ENCODE measurements at regions of chr7 and their contacts with region 1.

Region 1: DNA sequence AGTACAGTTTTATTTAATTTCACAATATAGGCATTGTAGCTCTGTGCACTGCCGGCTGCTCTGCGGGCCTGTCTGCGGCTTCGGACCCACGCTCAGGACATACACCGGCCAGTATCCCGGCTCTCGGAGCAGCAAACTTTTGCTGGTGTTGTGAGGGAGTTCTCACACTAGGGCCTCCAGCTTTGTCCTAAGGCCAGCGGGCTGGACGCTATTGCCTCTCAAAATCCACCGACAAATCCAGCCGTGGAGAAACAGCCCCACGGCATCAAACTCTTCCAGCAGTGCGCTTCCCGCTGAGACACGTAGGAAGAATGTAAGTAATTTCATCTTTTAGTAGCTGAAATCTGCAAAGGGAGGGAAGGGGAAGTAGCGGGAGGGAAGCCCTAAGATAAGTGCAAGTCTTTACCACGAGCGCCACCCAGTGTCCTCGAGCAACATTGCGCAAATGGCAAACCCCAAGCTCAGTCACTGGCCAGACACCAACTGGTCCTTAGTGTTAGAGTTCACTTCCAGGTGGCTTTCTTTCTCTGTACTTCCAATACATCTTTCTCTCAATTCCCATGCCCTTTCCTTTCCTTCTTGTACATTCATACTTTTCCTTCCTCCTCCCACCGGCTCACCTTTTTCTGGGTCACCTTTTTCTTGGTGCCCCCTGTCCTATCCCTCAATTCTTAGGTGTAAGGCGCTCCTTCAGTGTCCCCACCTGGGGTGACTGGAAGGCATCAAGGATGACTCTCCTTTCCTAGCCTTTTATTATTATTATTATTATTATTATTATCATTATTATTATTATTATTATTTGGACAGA is 3.0 kb upstream of the DLX5 start:
- DNase-seq: peak; percentile 77 to 87 (median 87)
- ATAC-seq: peak; percentile 87 to 92
- H3K4me3 ChIP-seq: peak overlapping the region; percentile 66
- H3K27ac ChIP-seq: no peak overlapping the region
- H3K4me1 ChIP-seq: peaks cover 3% of the 10 kb centered on the region
- H3K27me3 ChIP-seq: no peaks in the 10 kb centered on the region

Region 2: DNA sequence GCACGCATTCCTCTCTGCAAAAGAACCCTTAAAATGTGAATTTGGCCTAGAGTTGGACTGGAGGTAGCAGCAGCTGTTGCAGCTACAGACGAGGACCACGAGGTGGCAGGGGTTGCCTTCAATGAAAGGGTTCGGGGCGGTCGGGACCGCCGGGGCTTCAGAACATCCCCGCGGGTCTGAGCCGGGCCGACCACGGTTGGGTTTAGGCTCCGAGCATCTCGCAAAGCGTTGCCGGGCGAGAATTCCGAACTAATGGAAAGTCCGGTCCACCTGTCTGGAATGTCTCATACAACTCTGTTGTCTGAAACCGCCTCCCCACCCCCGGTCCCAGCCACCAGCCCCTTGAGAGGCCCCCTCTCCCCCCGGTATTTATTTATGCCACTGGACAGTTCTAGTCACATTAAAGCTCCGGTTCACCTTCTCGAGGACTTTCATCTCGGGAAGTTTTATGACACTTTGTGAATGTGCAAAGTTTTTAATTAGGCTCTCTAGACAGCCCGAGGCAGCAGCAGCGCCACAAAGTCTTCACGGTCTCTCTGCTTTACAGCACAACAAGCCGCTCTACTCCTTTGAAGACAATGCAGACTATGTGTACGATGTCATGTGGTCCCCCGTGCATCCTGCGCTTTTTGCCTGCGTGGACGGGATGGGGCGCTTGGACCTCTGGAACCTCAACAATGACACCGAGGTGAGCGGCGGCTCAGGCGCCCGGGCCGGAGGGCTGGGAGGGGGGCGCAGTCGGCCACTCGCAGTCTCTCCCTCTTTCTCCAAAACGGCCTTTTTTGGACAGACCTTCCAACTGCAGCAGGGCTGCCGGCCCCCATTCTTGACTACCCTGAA is 951.9 kb before region 1 on chr7:
- intact Hi-C with region 1: loop called (anchors 5 to 10 kb)
- DNase-seq: peak; percentile 64 to 85 (median 85)
- ATAC-seq: peak; percentile 95 to 97
- H3K4me3 ChIP-seq: peak overlapping the region; percentile 63
- H3K27ac ChIP-seq: no peak overlapping the region
- H3K4me1 ChIP-seq: no peaks in the 10 kb centered on the region
- H3K27me3 ChIP-seq: no peaks in the 10 kb centered on the region

Region 3: GRCh38 chr7:96414931-96415292 is 612.7 kb before region 1 on chr7:
- intact Hi-C with region 1: loop called in 1 of 4 experiments (anchors 10 kb)
- DNase-seq: peak in 1 of 3 donors; percentile 31
- ATAC-seq: peak; percentile 68 to 69
- H3K4me3 ChIP-seq: no peak overlapping the region
- H3K27ac ChIP-seq: no peak overlapping the region
- H3K4me1 ChIP-seq: peaks cover 2% of the 10 kb centered on the region
- H3K27me3 ChIP-seq: no peaks in the 10 kb centered on the region

Region 4: DNA sequence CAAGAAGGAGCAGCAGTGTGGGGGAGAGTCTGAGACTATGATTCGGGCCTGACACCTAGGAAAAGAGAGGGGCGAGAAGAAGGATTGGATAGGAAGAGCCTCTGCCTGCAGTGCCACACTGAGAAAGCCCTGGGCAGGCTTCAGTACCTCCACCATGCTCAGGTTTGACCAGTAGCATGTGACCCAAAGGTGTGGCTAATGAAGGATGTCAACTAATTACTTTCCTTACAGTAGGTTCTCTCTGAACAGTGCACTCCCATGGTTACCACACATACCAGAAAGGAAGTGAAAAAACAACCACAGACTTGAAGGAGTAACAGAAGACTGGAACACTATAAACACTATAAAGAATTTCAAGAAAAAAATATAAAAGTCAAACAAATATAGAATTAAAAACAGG is 364.2 kb before region 1 on chr7:
- intact Hi-C with region 1: no loop called
- DNase-seq: no peak
- ATAC-seq: no peak
- H3K4me3 ChIP-seq: no peak overlapping the region
- H3K27ac ChIP-seq: no peak overlapping the region
- H3K4me1 ChIP-seq: no peaks in the 10 kb centered on the region
- H3K27me3 ChIP-seq: no peaks in the 10 kb centered on the region